HCT116 (cell line): ENCODE measurements at regions of chr12 and their contacts with region 1.

Region 1: GRCh38 chr12:7933255-7933729 is 2.7 kb downstream of the SLC2A3 start:
- DNase-seq: peak; percentile 94
- ATAC-seq: peak; percentile 99
- H3K4me3 ChIP-seq: no peak overlapping the region; a peak in 1 of 4 replicates
- H3K27ac ChIP-seq: no peak overlapping the region
- H3K4me1 ChIP-seq: peaks cover 2 to 20% of the 10 kb centered on the region in 2 experiments; a peak in 3 of 4 replicates
- H3K27me3 ChIP-seq: no peaks in the 10 kb centered on the region
- CTCF ChIP-seq: peak; percentile 67 to 97 (median 82)
- POLR2A ChIP-seq: no peak
- RAD21 ChIP-seq: peak; percentile 86

Region 2: DNA sequence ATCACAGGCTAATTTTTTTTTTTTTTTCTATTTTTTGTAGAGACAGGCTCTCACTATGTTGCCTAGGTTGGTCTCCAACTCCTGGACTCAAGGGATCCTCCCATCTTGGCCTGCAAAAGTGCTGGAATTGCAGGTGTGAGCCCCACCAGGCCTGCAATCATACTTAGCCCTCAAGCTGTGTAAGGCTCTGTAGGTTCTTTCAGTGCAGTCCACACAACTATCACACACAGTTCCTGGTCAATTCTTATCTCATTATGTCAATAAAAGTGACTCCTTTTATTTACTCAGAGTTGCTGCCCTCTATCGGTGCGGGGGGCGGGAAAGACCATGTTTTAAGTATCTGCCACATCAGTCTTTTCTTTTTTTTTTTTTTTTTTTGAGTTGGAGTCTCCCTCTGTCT is 26.3 kb before region 1 on chr12:
- CTCF ChIA-PET with region 1: interaction called, 16 read pairs
- POLR2A ChIA-PET with region 1: no interaction called
- RAD21 ChIA-PET with region 1: no interaction called
- intact Hi-C with region 1: no loop called
- DNase-seq: peak; percentile 56
- ATAC-seq: peak; percentile 91
- H3K4me3 ChIP-seq: no peak overlapping the region
- H3K27ac ChIP-seq: no peak overlapping the region
- H3K4me1 ChIP-seq: peaks cover 8 to 14% of the 10 kb centered on the region in 2 experiments; a peak in 3 of 4 replicates
- H3K27me3 ChIP-seq: no peaks in the 10 kb centered on the region
- CTCF ChIP-seq: peak; percentile 59 to 70 (median 63); a peak in 5 of 6 replicates
- POLR2A ChIP-seq: no peak
- RAD21 ChIP-seq: peak; percentile 52; the same call in 1 of the 2 replicates

Region 3: DNA sequence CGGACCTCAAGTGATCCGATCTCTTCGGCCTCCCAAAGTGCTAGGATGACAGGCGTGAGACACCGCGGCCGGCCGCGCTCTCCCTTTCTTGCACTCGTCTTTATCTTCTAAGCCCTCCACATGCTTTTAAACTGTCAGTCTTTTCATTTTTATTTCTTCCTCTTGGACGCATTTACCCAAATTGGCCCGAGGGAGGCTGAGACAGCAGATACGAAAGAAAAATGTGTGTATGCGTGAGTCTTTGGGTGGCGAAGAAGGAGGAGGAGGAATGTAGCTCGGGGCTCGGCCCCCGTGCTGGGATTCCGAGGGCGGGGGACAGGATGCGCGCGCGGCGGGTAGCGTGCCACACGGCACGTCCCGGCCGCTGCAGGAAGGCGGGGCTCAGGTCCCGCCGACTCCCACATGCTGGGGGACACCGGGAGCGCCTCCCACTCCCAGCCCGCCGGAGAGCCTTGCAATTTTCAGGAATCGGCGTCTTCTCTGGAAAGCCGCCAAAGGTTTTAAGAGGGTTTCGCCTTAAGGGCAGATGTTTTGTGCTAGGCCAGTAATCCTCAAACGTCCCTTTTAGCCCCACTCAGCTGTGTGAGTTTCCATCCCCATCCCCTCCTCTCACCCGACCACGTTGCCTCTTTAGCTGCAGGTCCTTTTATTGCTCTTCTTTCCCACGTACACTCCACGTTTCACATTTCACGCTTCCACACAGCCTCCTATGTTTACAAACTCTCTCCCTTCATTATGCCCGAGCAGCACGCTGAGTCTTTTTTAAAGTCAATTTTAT is 37.4 kb after region 1 on chr12:
- CTCF ChIA-PET with region 1: interaction called, 15 read pairs
- POLR2A ChIA-PET with region 1: no interaction called
- RAD21 ChIA-PET with region 1: no interaction called
- intact Hi-C with region 1: loop called (anchors 2 kb)
- DNase-seq: peak; percentile 61
- ATAC-seq: peak; percentile 97
- H3K4me3 ChIP-seq: peak overlapping the region; percentile 46 to 52
- H3K27ac ChIP-seq: peak overlapping the region; percentile 49
- H3K4me1 ChIP-seq: peaks cover 20 to 55% of the 10 kb centered on the region in 2 experiments
- H3K27me3 ChIP-seq: no peaks in the 10 kb centered on the region
- CTCF ChIP-seq: no peak
- POLR2A ChIP-seq: peak; percentile 59
- RAD21 ChIP-seq: no peak

Region 4: GRCh38 chr12:7995266-7995963 is 62.1 kb after region 1 on chr12:
- CTCF ChIA-PET with region 1: interaction called, 21 read pairs
- POLR2A ChIA-PET with region 1: no interaction called
- RAD21 ChIA-PET with region 1: interaction called in 1 of 2 experiments, 8 read pairs
- intact Hi-C with region 1: loop called (anchors 2 kb)
- DNase-seq: peak; percentile 64
- ATAC-seq: peak; percentile 99
- H3K4me3 ChIP-seq: no peak overlapping the region
- H3K27ac ChIP-seq: no peak overlapping the region
- H3K4me1 ChIP-seq: peaks cover 0 to 12% of the 10 kb centered on the region in 2 experiments; a peak in 2 of 4 replicates
- H3K27me3 ChIP-seq: no peaks in the 10 kb centered on the region
- CTCF ChIP-seq: peak; percentile 73 to 92 (median 85)
- POLR2A ChIP-seq: no peak
- RAD21 ChIP-seq: peak; percentile 88